SK-N-SH (cell line): ENCODE measurements at regions of chr4 and their contacts with region 1.

Region 1: GRCh38 chr4:155809835-155810234 is 51.0 kb downstream of the GUCY1B1 start:
- DNase-seq: peak; percentile 41
- H3K4me3 ChIP-seq: no peak overlapping the region; a peak in 1 of 4 replicates
- H3K27ac ChIP-seq: no peak overlapping the region
- H3K4me1 ChIP-seq: 0 out of 4 replicates have a peak, but pooled peaks cover 0 to 3% of the 10 kb centered on the region in 2 experiments
- H3K27me3 ChIP-seq: no peaks in the 10 kb centered on the region
- CTCF ChIP-seq: peak; percentile 80
- EP300 ChIP-seq: no peak
- RAD21 ChIP-seq: peak; percentile 82

Region 2: GRCh38 chr4:155419266-155419665 is 390.6 kb before region 1 on chr4:
- CTCF ChIA-PET with region 1: no interaction called
- POLR2A ChIA-PET with region 1: no interaction called
- DNase-seq: no peak
- H3K4me3 ChIP-seq: no peak overlapping the region
- H3K27ac ChIP-seq: no peak overlapping the region
- H3K4me1 ChIP-seq: no peaks in the 10 kb centered on the region
- H3K27me3 ChIP-seq: no peaks in the 10 kb centered on the region
- CTCF ChIP-seq: no peak
- EP300 ChIP-seq: no peak
- RAD21 ChIP-seq: no peak

Region 3: GRCh38 chr4:155795991-155796390 is 13.8 kb before region 1 on chr4:
- CTCF ChIA-PET with region 1: interaction called, 12 read pairs
- POLR2A ChIA-PET with region 1: no interaction called
- DNase-seq: peak; percentile 15
- H3K4me3 ChIP-seq: no peak overlapping the region
- H3K27ac ChIP-seq: no peak overlapping the region
- H3K4me1 ChIP-seq: no peaks in the 10 kb centered on the region
- H3K27me3 ChIP-seq: no peaks in the 10 kb centered on the region
- CTCF ChIP-seq: peak; percentile 44
- EP300 ChIP-seq: no peak
- RAD21 ChIP-seq: no peak

Region 4: DNA sequence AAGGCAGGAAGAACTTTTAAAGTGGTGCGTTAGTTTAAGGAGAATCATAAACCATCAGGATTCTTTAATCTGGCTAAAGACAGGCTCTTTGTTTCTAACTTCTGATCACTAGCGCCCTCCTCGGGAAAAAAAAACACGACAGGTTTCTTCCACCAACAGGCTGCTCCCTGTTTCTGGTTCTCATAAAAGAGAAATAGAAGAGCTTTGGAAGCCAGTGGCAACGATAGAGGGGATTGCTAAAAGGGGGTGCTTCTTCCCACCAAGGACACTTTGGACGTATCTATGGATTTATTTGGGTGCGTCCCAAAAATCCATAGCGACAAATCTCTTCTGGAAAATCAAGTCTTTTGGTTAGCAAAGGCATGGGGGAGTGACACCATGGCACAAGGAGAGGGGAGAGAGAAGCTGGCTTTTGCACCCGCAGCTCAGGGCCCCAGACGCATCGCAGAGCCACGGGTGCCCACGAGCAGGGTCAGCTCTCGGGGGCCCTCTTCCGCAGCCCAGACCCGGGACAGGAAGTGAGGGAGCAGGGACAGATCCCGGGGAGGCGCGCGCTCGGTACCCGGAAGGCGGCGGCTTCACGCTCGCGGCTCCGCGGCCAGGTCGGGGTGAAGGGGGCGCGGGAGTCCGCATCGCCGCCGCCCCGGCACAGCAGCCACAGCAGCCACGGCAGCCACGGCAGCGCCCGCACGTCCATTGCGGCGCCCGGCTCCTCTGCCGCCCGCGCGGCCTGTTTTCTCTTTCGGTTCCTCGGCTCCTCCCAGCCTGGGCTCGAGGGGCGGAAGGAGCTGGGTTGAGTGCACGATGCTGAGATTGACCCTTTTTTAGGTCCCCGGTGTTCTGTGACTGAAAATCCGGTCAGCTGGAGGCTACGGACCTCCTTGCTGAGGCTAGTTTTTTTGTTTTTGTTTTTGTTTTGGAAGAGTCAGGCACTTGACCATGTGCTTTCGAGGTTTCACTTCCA is 143.6 kb after region 1 on chr4 and contains the start of gene CTSO:
- CTCF ChIA-PET with region 1: interaction called, 28 read pairs
- POLR2A ChIA-PET with region 1: interaction called, 3 read pairs
- DNase-seq: peak; percentile 89
- H3K4me3 ChIP-seq: peak within 1 kb of the TSS; percentile 65 to 99
- H3K27ac ChIP-seq: peak within 1 kb of the TSS; percentile 96 to 98
- H3K4me1 ChIP-seq: peaks cover 0 to 5% of the 10 kb centered on the region in 2 experiments; a peak in 2 of 4 replicates
- H3K27me3 ChIP-seq: no peaks in the 10 kb centered on the region
- CTCF ChIP-seq: peak; percentile 72
- EP300 ChIP-seq: peak in 1 of 2 experiments; percentile 21; a peak in 1 of 4 replicates
- RAD21 ChIP-seq: peak; percentile 67
- polyA plus RNA-seq, gene CTSO: 3.3 and 4.4 TPM in 2 replicates

Region 5: GRCh38 chr4:156255230-156256007 is 445.6 kb after region 1 on chr4:
- CTCF ChIA-PET with region 1: no interaction called
- POLR2A ChIA-PET with region 1: no interaction called
- DNase-seq: no peak
- H3K4me3 ChIP-seq: no peak overlapping the region
- H3K27ac ChIP-seq: no peak overlapping the region
- H3K4me1 ChIP-seq: no peaks in the 10 kb centered on the region
- H3K27me3 ChIP-seq: peaks cover 4% of the 10 kb centered on the region; the same call in 1 of the 2 replicates
- CTCF ChIP-seq: no peak
- EP300 ChIP-seq: no peak
- RAD21 ChIP-seq: no peak